ENCODE measurements at regions of chr11 and their contacts with region 1.

Region 1: GRCh38 chr11:45285930-45286632 is at the start of gene SYT13:
- DNase-seq: peak; percentile 30 to 62
- ATAC-seq: peak; percentile 86 to 91
- H3K4me3 ChIP-seq: peak within 1 kb of the TSS; percentile 65
- H3K27ac ChIP-seq: peak within 1 kb of the TSS; percentile 73 to 87
- H3K4me1 ChIP-seq: peaks cover 12% of the 10 kb centered on the region
- CTCF ChIP-seq: no peak
- EP300 ChIP-seq: no peak
- POLR2A ChIP-seq: peak; percentile 24; the same call in 1 of the 2 replicates
- RAD21 ChIP-seq: no peak
- polyA plus RNA-seq, gene SYT13: 8.1 and 10.7 TPM in 2 replicates

Region 2: GRCh38 chr11:45259592-45259991 is 26.5 kb before region 1 on chr11:
- CTCF ChIA-PET with region 1: interaction called, 14 read pairs
- POLR2A ChIA-PET with region 1: no interaction called
- DNase-seq: peak; percentile 31 to 46
- ATAC-seq: peak in 1 of 2 experiments; percentile 41; a peak in 2 of 6 replicates
- H3K4me3 ChIP-seq: no peak overlapping the region
- H3K27ac ChIP-seq: peak overlapping the region; percentile 64 to 65
- H3K4me1 ChIP-seq: peaks cover 56% of the 10 kb centered on the region
- CTCF ChIP-seq: no peak
- EP300 ChIP-seq: no peak
- POLR2A ChIP-seq: no peak
- RAD21 ChIP-seq: no peak

Region 3: DNA sequence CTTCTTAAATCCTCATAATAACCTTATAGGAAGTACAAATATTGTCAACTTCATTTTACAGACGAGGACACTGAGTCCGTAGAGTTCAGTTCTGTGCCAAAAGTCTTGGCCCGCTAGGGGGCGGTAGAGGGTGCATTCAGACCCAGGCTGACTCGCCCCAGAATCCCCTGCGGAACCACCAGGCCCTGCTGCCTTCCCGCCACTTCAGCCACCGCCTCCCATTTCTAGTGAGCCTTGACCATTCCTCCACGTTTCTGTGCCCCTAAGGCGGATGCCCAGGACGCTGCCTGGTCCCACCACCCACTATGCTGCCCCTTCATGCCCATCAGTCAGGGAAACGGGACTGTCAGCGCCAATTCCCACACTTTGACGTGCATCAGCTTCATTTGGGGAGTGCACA is 19.0 kb before region 1 on chr11:
- CTCF ChIA-PET with region 1: interaction called, 10 read pairs
- POLR2A ChIA-PET with region 1: no interaction called
- DNase-seq: peak in 1 of 2 experiments; percentile 38
- ATAC-seq: peak in 1 of 2 experiments; percentile 29; a peak in 2 of 6 replicates
- H3K4me3 ChIP-seq: no peak overlapping the region
- H3K27ac ChIP-seq: peak overlapping the region; percentile 78 to 86
- H3K4me1 ChIP-seq: peaks cover 90% of the 10 kb centered on the region
- CTCF ChIP-seq: peak; percentile 50
- EP300 ChIP-seq: no peak
- POLR2A ChIP-seq: no peak
- RAD21 ChIP-seq: no peak